ENCODE measurements at regions of chr16 and their contacts with region 1.

Region 1: DNA sequence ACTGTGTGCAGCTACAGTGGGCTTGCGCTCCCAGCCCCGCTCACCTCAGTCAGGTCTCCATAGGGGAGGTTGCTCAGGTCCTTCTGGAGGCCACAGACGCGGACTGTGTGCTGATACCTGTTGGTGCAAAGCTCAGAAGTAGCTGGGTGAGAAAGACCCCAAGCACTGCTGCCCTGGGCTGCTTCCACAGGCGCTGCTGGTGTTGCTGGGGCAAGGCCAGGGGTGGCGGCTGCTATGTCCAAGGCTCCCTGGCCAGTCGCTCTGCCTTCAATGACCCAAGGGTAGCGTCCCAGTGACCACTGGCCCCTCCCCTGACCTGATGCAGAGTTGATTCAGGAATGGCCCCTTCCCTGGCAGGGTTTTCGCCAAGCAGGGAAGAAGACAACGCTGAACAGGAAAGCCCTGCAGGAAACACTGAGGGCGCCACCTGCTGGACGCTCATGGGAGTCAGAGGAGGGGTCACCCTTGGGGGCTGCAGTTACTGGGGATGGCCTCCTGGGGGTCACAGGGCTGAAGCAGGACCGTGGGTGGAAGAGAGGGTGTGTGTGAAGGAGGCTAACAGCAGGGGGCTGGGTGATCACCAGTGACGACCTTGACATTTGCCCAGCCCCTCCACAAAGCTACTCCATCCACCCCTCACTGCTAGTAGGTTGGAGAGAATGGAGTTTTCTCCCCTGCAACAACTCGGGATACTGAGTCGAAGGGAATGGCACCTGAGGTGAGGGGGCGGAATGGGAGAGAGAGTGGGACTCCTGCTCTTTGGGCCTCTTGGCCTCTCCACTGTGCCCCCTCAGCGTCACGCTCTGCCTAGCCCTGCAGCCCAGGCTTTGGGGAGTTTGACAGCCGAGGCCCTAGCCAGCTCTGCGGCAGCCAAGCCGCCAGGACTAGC is 38.3 kb downstream of the ABCC12 start:
- DNase-seq: no peak
- ATAC-seq: peak; percentile 98
- H3K4me3 ChIP-seq: no peak overlapping the region
- H3K27ac ChIP-seq: no peak overlapping the region
- H3K4me1 ChIP-seq: no peaks in the 10 kb centered on the region
- H3K27me3 ChIP-seq: no peaks in the 10 kb centered on the region
- CTCF ChIP-seq: peak; percentile 77 to 96 (median 95)
- EP300 ChIP-seq: no peak
- POLR2A ChIP-seq: no peak
- RAD21 ChIP-seq: peak; percentile 86

Region 2: GRCh38 chr16:47873434-47873833 is 244.0 kb before region 1 on chr16:
- CTCF ChIA-PET with region 1: interaction called, 54 read pairs
- POLR2A ChIA-PET with region 1: no interaction called
- RAD21 ChIA-PET with region 1: interaction called, 5 read pairs
- SMC1A ChIA-PET with region 1: interaction called, 6 read pairs
- in situ Hi-C with region 1: no loop called
- intact Hi-C with region 1: no loop called
- DNase-seq: no peak
- ATAC-seq: peak; percentile 87
- H3K4me3 ChIP-seq: no peak overlapping the region
- H3K27ac ChIP-seq: no peak overlapping the region
- H3K4me1 ChIP-seq: no peaks in the 10 kb centered on the region
- H3K27me3 ChIP-seq: no peaks in the 10 kb centered on the region
- CTCF ChIP-seq: peak; percentile 39 to 57 (median 50)
- EP300 ChIP-seq: no peak
- POLR2A ChIP-seq: no peak
- RAD21 ChIP-seq: peak; percentile 63

Region 3: GRCh38 chr16:47995354-47995753 is 122.1 kb before region 1 on chr16:
- CTCF ChIA-PET with region 1: no interaction called
- POLR2A ChIA-PET with region 1: no interaction called
- RAD21 ChIA-PET with region 1: no interaction called
- SMC1A ChIA-PET with region 1: no interaction called
- in situ Hi-C with region 1: no loop called
- intact Hi-C with region 1: no loop called
- DNase-seq: no peak
- ATAC-seq: no peak
- H3K4me3 ChIP-seq: no peak overlapping the region
- H3K27ac ChIP-seq: no peak overlapping the region
- H3K4me1 ChIP-seq: no peaks in the 10 kb centered on the region
- H3K27me3 ChIP-seq: no peaks in the 10 kb centered on the region; a peak in 1 of 4 replicates
- CTCF ChIP-seq: peak in 1 of 3 experiments; percentile 13; a peak in 1 of 6 replicates
- EP300 ChIP-seq: no peak
- POLR2A ChIP-seq: no peak
- RAD21 ChIP-seq: no peak

Region 4: DNA sequence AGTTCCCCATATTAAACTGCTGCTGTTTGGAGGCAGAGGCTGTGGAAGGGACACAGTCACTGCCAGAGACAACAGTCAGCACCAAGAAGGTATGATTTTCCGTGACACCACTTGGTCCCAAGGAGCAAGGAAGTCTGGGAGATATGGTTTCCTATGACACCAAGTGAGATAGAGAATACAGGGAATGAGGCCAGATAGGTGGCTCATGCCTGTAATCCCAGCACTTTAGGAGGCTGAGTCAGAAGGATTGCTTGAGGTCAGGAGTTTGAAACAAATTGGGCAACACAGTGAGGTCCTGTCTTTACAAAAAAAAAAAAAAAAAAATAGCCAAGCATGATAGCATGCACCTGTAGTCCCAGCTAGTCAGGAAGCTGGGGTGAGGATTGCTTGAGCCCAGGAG is 52.5 kb before region 1 on chr16:
- CTCF ChIA-PET with region 1: interaction called, 7 read pairs
- POLR2A ChIA-PET with region 1: no interaction called
- RAD21 ChIA-PET with region 1: interaction called, 5 read pairs
- SMC1A ChIA-PET with region 1: interaction called, 5 read pairs
- in situ Hi-C with region 1: no loop called
- intact Hi-C with region 1: loop called (anchors 5 kb)
- DNase-seq: no peak
- ATAC-seq: no peak
- H3K4me3 ChIP-seq: no peak overlapping the region
- H3K27ac ChIP-seq: no peak overlapping the region
- H3K4me1 ChIP-seq: no peaks in the 10 kb centered on the region
- H3K27me3 ChIP-seq: no peaks in the 10 kb centered on the region
- CTCF ChIP-seq: no peak
- EP300 ChIP-seq: no peak
- POLR2A ChIP-seq: no peak
- RAD21 ChIP-seq: no peak

Region 5: GRCh38 chr16:48091117-48091516 is 26.3 kb before region 1 on chr16:
- CTCF ChIA-PET with region 1: interaction called, 12 read pairs
- POLR2A ChIA-PET with region 1: no interaction called
- RAD21 ChIA-PET with region 1: interaction called, 21 read pairs
- SMC1A ChIA-PET with region 1: interaction called, 21 read pairs
- in situ Hi-C with region 1: no loop called
- intact Hi-C with region 1: no loop called
- DNase-seq: no peak
- ATAC-seq: no peak
- H3K4me3 ChIP-seq: no peak overlapping the region
- H3K27ac ChIP-seq: no peak overlapping the region
- H3K4me1 ChIP-seq: peaks cover 3% of the 10 kb centered on the region; the same call in 1 of the 2 replicates
- H3K27me3 ChIP-seq: no peaks in the 10 kb centered on the region
- CTCF ChIP-seq: no peak
- EP300 ChIP-seq: no peak
- POLR2A ChIP-seq: no peak
- RAD21 ChIP-seq: no peak

Region 6: DNA sequence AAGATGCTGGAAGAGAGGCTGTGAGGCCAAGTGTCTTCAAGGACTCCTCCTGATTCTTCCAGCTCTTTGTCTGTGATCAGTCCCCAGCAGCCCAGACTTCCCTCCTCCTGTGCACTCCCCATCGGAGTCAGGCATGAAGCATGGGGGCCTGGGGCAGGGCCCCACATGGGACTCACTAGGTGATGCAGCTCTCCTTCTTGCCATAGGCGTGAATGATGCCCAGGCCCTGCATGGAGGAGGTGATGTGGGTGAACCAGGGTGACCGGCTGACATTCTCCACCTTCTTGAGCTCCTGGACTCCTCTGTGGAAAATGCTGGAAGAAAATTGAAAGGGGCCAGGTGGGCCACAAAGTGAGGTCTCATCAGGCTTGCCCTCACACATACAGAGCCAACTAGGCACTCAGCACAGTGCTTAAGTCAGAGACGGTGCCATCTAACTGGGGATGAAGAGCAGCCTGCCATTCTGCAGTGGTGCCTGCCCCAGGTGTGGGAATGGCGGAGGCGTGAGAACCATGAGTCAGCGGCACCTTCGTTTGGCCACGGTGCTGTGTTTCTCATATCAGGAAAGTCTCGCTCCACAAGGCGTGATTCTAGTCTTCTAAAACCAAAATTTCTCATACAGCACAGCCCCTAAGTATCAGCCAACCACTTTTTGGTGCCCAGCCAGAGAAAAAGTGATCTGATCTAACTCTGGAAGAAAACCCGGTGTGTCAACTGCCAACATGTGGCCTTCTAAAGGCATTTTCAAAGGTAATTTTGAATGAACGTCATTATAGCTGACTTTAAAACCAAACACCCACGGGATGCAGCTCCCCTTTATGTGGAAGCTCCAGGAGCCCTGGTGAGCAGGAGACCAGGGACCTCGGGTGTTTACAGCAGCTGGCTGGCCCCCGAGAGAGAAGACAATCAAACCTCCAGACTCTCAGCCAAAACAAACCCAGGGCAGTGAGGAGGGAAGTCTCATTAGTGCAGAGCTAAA is 16.5 kb before region 1 on chr16:
- CTCF ChIA-PET with region 1: interaction called, 33 read pairs
- POLR2A ChIA-PET with region 1: interaction called, 3 read pairs
- RAD21 ChIA-PET with region 1: interaction called, 22 read pairs
- SMC1A ChIA-PET with region 1: interaction called, 14 read pairs
- in situ Hi-C with region 1: no loop called
- intact Hi-C with region 1: no loop called
- DNase-seq: peak; percentile 74
- ATAC-seq: peak; percentile 80
- H3K4me3 ChIP-seq: no peak overlapping the region
- H3K27ac ChIP-seq: peak overlapping the region; percentile 33
- H3K4me1 ChIP-seq: peaks cover 25% of the 10 kb centered on the region
- H3K27me3 ChIP-seq: no peaks in the 10 kb centered on the region
- CTCF ChIP-seq: no peak
- EP300 ChIP-seq: peak in 1 of 2 experiments; percentile 83; a peak in 2 of 4 replicates
- POLR2A ChIP-seq: no peak
- RAD21 ChIP-seq: no peak

Region 7: DNA sequence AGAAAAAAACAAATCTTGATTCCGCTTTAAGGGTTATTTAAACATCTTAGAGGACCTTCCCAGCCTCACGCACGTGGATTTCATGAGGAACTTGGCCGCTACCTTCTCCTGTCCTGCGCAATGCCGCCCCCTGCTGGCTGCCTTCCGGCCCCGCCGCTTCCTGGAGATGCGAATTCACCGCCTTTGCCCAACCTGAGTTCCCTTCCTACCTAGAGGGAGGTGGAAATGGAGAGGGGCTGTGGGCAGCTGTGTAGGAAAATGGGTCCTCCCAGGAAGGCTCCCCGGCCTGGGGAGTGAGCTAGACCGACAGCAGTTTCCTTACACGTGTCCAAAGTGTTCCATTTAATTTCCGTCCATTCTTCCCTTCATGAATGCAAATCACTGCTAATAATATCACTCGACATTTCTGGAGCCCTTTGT is 39.3 kb after region 1 on chr16:
- CTCF ChIA-PET with region 1: interaction called, 11 read pairs
- POLR2A ChIA-PET with region 1: interaction called, 4 read pairs
- RAD21 ChIA-PET with region 1: interaction called, 5 read pairs
- SMC1A ChIA-PET with region 1: interaction called, 3 read pairs
- in situ Hi-C with region 1: no loop called
- intact Hi-C with region 1: no loop called
- DNase-seq: no peak
- ATAC-seq: peak; percentile 81
- H3K4me3 ChIP-seq: no peak overlapping the region
- H3K27ac ChIP-seq: no peak overlapping the region
- H3K4me1 ChIP-seq: peaks cover 4% of the 10 kb centered on the region; the same call in 1 of the 2 replicates
- H3K27me3 ChIP-seq: no peaks in the 10 kb centered on the region; a peak in 1 of 4 replicates
- CTCF ChIP-seq: peak; percentile 90 to 96 (median 96)
- EP300 ChIP-seq: no peak
- POLR2A ChIP-seq: no peak
- RAD21 ChIP-seq: peak; percentile 83

Region 8: GRCh38 chr16:48310908-48311641 is 193.6 kb after region 1 on chr16:
- CTCF ChIA-PET with region 1: no interaction called
- POLR2A ChIA-PET with region 1: no interaction called
- RAD21 ChIA-PET with region 1: no interaction called
- SMC1A ChIA-PET with region 1: no interaction called
- in situ Hi-C with region 1: no loop called
- intact Hi-C with region 1: no loop called
- DNase-seq: no peak
- ATAC-seq: no peak
- H3K4me3 ChIP-seq: no peak overlapping the region
- H3K27ac ChIP-seq: no peak overlapping the region
- H3K4me1 ChIP-seq: no peaks in the 10 kb centered on the region
- H3K27me3 ChIP-seq: no peaks in the 10 kb centered on the region
- CTCF ChIP-seq: no peak
- EP300 ChIP-seq: no peak
- POLR2A ChIP-seq: no peak
- RAD21 ChIP-seq: no peak

Region 9: GRCh38 chr16:48321317-48322036 is 204.0 kb after region 1 on chr16:
- CTCF ChIA-PET with region 1: no interaction called
- POLR2A ChIA-PET with region 1: no interaction called
- RAD21 ChIA-PET with region 1: no interaction called
- SMC1A ChIA-PET with region 1: no interaction called
- in situ Hi-C with region 1: no loop called
- intact Hi-C with region 1: no loop called
- DNase-seq: no peak
- ATAC-seq: no peak
- H3K4me3 ChIP-seq: no peak overlapping the region
- H3K27ac ChIP-seq: no peak overlapping the region
- H3K4me1 ChIP-seq: peaks cover 8% of the 10 kb centered on the region; the same call in 1 of the 2 replicates
- H3K27me3 ChIP-seq: no peaks in the 10 kb centered on the region
- CTCF ChIP-seq: no peak
- EP300 ChIP-seq: no peak
- POLR2A ChIP-seq: no peak
- RAD21 ChIP-seq: no peak